ENCODE measurements at regions of chr2 and their contacts with region 1.

Region 1: DNA sequence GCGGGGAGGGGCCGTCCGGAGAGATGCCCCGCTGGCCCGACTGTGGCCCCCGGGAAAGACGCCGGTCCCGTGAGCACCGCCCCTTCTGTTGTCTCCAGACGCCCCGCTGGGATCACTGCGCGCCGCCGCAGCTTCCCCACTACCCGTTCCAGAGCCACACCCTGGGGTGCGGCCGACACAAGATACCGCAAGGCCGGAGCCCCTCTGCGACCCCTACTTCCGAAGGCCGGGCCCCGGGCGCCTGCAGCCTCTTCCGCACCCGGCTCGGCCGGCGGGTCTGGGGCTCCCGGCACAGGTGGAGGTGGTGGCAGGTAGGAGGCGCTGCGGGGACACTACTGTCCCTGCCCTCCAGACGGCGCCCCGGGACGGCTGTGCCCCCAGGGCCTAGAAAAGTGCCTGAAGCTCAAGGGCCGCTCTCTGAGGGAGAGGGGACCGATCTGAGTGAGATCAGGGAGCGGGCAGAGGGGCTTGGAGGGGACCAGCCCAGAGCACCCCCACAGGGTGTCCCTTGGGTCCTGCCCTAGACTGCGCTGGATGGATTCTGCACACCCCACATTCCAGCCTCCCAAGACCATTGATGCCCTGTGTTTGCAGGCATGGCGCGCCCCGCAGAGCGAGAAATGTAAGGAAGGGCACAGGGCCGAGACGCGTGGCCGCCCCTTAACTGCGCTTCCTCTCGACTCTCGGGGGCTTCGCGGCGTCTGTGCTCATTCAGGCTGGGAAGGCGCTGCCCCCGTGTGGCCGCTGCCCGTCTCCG is 80.0 kb downstream of the GFPT1 start:
- DNase-seq: peak; percentile 85
- ATAC-seq: peak; percentile 92
- H3K4me3 Mint-ChIP-seq: peak overlapping the region; percentile 64
- H3K27ac Mint-ChIP-seq: no peak overlapping the region
- H3K4me1 Mint-ChIP-seq: peaks cover 14% of the 10 kb centered on the region
- H3K27me3 Mint-ChIP-seq: peaks cover 15% of the 10 kb centered on the region

Region 2: DNA sequence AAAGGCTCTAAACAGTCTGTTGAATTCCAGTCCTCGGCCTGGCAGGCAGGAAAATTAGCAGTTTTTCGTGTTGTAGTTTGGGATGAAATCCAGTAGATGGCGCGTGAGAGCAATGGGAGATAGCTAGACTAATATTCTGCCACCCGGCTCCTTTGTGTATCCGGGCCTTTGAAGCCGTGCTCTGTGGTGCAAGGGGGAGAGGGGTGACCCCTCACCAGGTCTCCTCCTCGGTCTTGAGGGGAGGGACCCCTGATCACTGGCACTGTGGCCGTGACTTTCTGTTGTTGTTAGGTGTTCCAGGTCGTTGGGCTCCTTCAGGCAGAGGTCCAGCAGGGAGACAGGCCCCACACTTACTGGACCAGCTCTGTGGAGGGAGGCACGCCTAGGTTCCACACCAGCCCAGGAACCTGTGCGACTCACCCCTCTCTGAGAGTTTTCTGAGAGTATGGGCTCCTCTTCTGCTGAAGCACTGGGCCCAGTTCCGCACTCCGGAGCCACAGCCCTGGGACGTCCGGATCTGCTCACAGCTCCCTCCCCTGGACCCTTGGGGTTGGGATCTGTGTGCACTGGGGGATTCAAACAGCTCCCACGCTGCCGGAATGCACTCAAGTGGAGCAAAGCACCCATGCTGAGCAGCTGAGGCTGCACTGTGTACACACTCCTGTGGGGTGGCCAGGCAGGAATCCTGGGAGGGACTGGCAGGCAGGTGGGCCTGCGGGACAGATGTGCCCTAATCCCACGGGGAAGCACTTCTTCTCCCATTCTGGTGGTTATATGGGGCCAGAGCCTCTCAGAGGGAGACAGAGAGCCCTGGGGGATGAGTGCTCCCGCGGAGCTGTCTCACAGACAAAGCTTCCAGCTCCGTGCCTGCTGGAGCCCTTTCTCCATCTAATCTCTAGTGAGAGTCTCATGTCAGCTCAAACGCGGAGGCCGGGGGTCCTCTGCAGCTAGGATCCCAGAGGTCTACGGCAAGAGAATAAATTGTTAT is 363.1 kb before region 1 on chr2:
- CTCF ChIA-PET with region 1: interaction called, 6 read pairs
- POLR2A ChIA-PET with region 1: no interaction called
- intact Hi-C with region 1: loop called (anchors 1 to 2 kb)
- DNase-seq: peak; percentile 64
- ATAC-seq: peak; percentile 71
- H3K4me3 Mint-ChIP-seq: no peak overlapping the region
- H3K27ac Mint-ChIP-seq: no peak overlapping the region
- H3K4me1 Mint-ChIP-seq: peaks cover 6% of the 10 kb centered on the region
- H3K27me3 Mint-ChIP-seq: peaks cover 23% of the 10 kb centered on the region

Region 3: DNA sequence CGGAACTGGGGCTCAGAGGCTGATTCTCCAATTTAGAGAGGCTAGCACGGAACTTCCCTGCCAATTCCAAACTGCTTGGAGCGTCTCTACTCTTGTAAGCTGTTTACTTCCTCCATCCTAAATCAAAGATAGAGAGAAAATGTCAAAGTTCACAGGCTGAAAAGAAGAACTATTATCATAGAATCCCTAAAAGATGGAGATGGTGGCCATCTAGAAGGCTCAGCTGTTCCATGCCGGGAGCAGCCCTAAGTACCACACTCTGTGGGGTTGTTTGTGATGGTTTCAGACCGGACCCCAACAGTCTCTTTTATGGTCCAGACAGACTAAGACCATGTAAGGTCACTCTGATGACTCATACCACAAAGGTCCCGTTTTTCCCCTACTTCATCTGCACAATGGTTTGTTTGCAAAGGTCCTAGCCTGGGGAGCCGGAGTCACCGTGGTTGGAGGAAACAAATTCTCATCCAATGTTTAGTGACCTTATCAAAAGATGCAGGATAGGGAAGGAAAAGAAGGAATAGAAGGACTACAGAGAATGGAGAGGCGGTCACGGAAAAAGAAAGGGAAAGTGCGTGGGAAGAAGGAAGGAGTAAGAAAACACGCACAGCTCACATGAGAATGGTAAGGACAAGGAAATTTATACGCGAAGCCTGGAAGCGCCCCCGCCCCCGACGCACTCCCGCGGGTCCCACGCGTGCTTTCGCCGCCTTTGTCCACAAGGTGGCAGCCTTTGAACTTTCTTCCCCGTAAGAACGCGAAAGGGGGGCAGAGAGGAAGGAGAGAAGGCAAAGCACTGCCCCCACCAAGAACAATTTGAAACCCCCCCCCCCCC is 294.5 kb before region 1 on chr2:
- CTCF ChIA-PET with region 1: interaction called, 3 read pairs
- POLR2A ChIA-PET with region 1: no interaction called
- intact Hi-C with region 1: loop called (anchors 1 to 5 kb)
- DNase-seq: peak; percentile 59
- ATAC-seq: peak; percentile 30
- H3K4me3 Mint-ChIP-seq: peak overlapping the region; percentile 65
- H3K27ac Mint-ChIP-seq: peak overlapping the region; percentile 23
- H3K4me1 Mint-ChIP-seq: peaks cover 14% of the 10 kb centered on the region
- H3K27me3 Mint-ChIP-seq: peaks cover 40% of the 10 kb centered on the region

Region 4: GRCh38 chr2:69026026-69026425 is 281.0 kb before region 1 on chr2:
- CTCF ChIA-PET with region 1: interaction called, 18 read pairs
- POLR2A ChIA-PET with region 1: interaction called, 3 read pairs
- intact Hi-C with region 1: loop called (anchors 1 kb)
- DNase-seq: peak; percentile 63
- ATAC-seq: peak; percentile 55
- H3K4me3 Mint-ChIP-seq: no peak overlapping the region
- H3K27ac Mint-ChIP-seq: no peak overlapping the region
- H3K4me1 Mint-ChIP-seq: no peaks in the 10 kb centered on the region
- H3K27me3 Mint-ChIP-seq: peaks cover 12% of the 10 kb centered on the region

Region 5: GRCh38 chr2:69260666-69261065 is 46.3 kb before region 1 on chr2:
- CTCF ChIA-PET with region 1: no interaction called
- POLR2A ChIA-PET with region 1: no interaction called
- intact Hi-C with region 1: no loop called
- DNase-seq: no peak
- ATAC-seq: no peak
- H3K4me3 Mint-ChIP-seq: no peak overlapping the region
- H3K27ac Mint-ChIP-seq: no peak overlapping the region
- H3K4me1 Mint-ChIP-seq: no peaks in the 10 kb centered on the region
- H3K27me3 Mint-ChIP-seq: peaks cover 23% of the 10 kb centered on the region

Measured in activated CD4-positive, alpha-beta T cell treated with anti-CD3 and anti-CD28 coated beads for 36 hours (primary cell).